CD4-positive, alpha-beta memory T cell (primary cell): ENCODE measurements at regions of chr14 and their contacts with region 1.

Region 1: GRCh38 chr14:99215277-99215676 is 56.7 kb downstream of the BCL11B start:
- DNase-seq: no peak
- H3K4me3 ChIP-seq: peak overlapping the region in 1 of 2 donors; percentile 50
- H3K4me3 Mint-ChIP-seq: peak overlapping the region; percentile 82 to 90 (median 86)
- H3K27ac ChIP-seq: peak overlapping the region; percentile 53
- H3K27ac Mint-ChIP-seq: peak overlapping the region; percentile 86 to 95 (median 94)
- H3K4me1 ChIP-seq: peaks cover 97% of the 10 kb centered on the region
- H3K4me1 Mint-ChIP-seq: peaks cover 80 to 100% (median 89%) of the 10 kb centered on the region in 4 donors
- H3K27me3 ChIP-seq: no peaks in the 10 kb centered on the region
- H3K27me3 Mint-ChIP-seq: no peaks in the 10 kb centered on the region

Region 2: GRCh38 chr14:98871796-98872195 is 343.5 kb before region 1 on chr14:
- CTCF ChIA-PET with region 1: no interaction called
- POLR2A ChIA-PET with region 1: no interaction called
- intact Hi-C with region 1: no loop called
- DNase-seq: no peak
- H3K4me3 ChIP-seq: no peak overlapping the region
- H3K4me3 Mint-ChIP-seq: no peak overlapping the region
- H3K27ac ChIP-seq: no peak overlapping the region
- H3K27ac Mint-ChIP-seq: no peak overlapping the region
- H3K4me1 ChIP-seq: no peaks in the 10 kb centered on the region
- H3K4me1 Mint-ChIP-seq: peaks cover 0 to 4% (median 1%) of the 10 kb centered on the region in 4 donors
- H3K27me3 ChIP-seq: no peaks in the 10 kb centered on the region
- H3K27me3 Mint-ChIP-seq: no peaks in the 10 kb centered on the region

Region 3: DNA sequence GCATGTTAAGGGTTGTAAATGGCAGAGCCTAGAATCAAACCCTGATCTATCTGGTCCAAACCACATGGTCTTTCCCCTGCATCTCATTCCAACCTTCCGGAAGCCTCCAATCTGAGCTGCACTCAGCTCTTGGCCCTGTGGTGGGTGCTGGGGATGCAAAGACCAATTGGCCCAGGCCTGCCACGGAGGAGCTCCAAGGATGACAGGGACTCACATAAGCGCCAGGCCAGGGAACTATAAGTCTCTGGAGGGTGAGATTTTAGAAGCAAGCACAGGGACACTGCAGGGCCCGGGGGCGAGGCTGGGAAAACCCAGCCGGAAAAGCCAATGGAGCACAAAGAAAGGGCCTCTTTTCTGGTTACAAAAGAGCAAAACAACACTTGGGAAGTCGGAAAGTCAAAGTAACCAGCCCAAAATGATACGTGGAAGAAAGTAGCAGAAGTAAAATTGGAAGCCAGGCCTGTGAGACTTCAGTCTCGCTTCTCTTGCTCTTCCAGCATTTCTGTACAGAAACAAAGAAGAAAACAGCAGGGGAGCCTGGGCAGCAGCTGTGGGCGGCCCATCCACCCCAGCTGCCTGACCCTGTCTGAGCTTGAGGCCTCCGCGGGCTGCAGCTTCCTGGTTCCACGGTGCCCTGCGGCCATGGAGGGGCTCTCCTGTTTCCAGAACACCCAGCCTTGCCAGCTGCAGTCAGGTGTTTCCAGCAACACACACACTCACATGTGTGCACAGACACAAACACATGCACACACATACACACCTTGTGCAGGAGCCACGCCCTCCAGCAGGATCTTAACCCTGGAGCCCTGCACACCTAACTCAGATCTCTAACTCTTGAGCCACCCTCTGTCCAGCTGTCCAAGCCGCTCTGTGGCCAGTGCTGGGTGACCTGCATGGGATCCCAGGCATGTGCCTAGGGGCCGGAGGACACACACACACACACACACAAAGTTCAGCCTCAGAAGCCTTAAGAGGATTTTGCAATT is 121.5 kb before region 1 on chr14:
- CTCF ChIA-PET with region 1: no interaction called
- POLR2A ChIA-PET with region 1: no interaction called
- intact Hi-C with region 1: no loop called
- DNase-seq: no peak
- H3K4me3 ChIP-seq: no peak overlapping the region
- H3K4me3 Mint-ChIP-seq: no peak overlapping the region
- H3K27ac ChIP-seq: no peak overlapping the region
- H3K27ac Mint-ChIP-seq: no peak overlapping the region
- H3K4me1 ChIP-seq: no peaks in the 10 kb centered on the region
- H3K4me1 Mint-ChIP-seq: no peaks in the 10 kb centered on the region
- H3K27me3 ChIP-seq: no peaks in the 10 kb centered on the region
- H3K27me3 Mint-ChIP-seq: no peaks in the 10 kb centered on the region

Region 4: DNA sequence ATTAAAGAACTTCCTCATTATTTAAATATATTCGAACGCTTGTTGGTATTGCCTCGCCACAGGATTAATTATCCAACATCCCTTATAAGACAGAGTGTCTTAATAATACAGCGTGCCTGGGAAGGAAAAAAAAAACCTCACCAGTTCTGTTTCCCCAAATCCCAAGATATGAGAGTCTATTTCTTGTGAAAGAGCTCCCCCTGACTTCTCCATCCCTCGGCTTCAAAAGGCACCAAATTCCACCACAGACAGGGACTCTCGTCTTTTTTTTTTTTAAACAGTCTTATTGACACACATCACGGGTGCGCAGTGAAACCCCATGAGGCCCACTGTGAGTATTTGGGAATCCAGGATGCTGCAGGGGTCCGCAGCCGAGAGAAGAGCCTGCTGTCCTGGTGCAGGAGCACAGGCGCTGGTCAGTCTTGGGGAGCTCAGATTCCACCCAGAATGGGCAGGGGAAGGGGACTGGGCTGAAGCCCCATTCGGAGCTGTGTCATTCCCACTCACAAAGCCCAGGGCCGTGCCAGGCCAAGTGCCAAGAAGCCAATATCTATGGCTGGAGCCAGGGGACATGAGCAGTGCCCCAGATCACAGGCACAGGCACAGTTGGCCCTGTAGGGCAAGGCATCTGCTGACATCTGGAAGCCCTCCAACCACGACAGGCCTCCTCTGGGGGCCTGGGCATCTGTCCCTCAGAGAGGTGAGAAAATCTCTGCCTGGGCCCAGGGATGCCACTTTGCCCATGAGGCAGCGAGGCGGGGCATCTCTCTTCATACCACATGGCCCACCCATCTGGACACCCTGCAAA is 15.2 kb before region 1 on chr14:
- CTCF ChIA-PET with region 1: interaction called, 4 read pairs
- POLR2A ChIA-PET with region 1: interaction called, 6,015 read pairs
- intact Hi-C with region 1: loop called (anchors 1 kb)
- DNase-seq: no peak
- H3K4me3 ChIP-seq: no peak overlapping the region
- H3K4me3 Mint-ChIP-seq: peak overlapping the region; percentile 59 to 94 (median 74)
- H3K27ac ChIP-seq: peak overlapping the region; percentile 70
- H3K27ac Mint-ChIP-seq: peak overlapping the region; percentile 88 to 98 (median 94)
- H3K4me1 ChIP-seq: peaks cover 100% of the 10 kb centered on the region
- H3K4me1 Mint-ChIP-seq: peaks cover 77 to 100% (median 98%) of the 10 kb centered on the region in 4 donors
- H3K27me3 ChIP-seq: no peaks in the 10 kb centered on the region
- H3K27me3 Mint-ChIP-seq: no peaks in the 10 kb centered on the region

Region 5: GRCh38 chr14:99205086-99205688 is 10.1 kb before region 1 on chr14:
- CTCF ChIA-PET with region 1: interaction called, 4 read pairs
- POLR2A ChIA-PET with region 1: interaction called, 6,015 read pairs
- intact Hi-C with region 1: loop called (anchors 1 kb)
- DNase-seq: no peak
- H3K4me3 ChIP-seq: no peak overlapping the region
- H3K4me3 Mint-ChIP-seq: peak overlapping the region; percentile 68 to 85 (median 78)
- H3K27ac ChIP-seq: peak overlapping the region; percentile 70
- H3K27ac Mint-ChIP-seq: peak overlapping the region; percentile 93 to 96 (median 94)
- H3K4me1 ChIP-seq: peaks cover 100% of the 10 kb centered on the region
- H3K4me1 Mint-ChIP-seq: peaks cover 82 to 100% (median 97%) of the 10 kb centered on the region in 4 donors
- H3K27me3 ChIP-seq: no peaks in the 10 kb centered on the region
- H3K27me3 Mint-ChIP-seq: no peaks in the 10 kb centered on the region

Region 6: GRCh38 chr14:99230208-99231151 is 15.2 kb after region 1 on chr14:
- CTCF ChIA-PET with region 1: interaction called, 15 read pairs
- POLR2A ChIA-PET with region 1: interaction called, 6,015 read pairs
- intact Hi-C with region 1: loop called (anchors 2 kb)
- DNase-seq: peak; percentile 88 to 95 (median 90)
- H3K4me3 ChIP-seq: peak overlapping the region in 1 of 2 donors; percentile 13
- H3K4me3 Mint-ChIP-seq: peak overlapping the region; percentile 56 to 94 (median 80)
- H3K27ac ChIP-seq: peak overlapping the region; percentile 98
- H3K27ac Mint-ChIP-seq: peak overlapping the region; percentile 98 to 99 (median 99)
- H3K4me1 ChIP-seq: peaks cover 100% of the 10 kb centered on the region
- H3K4me1 Mint-ChIP-seq: peaks cover 78 to 98% (median 89%) of the 10 kb centered on the region in 4 donors
- H3K27me3 ChIP-seq: no peaks in the 10 kb centered on the region
- H3K27me3 Mint-ChIP-seq: no peaks in the 10 kb centered on the region